HCT116 (cell line): ENCODE measurements at regions of chr17 and their contacts with region 1.

Region 1: GRCh38 chr17:58020401-58020800 is 13.4 kb upstream of the SRSF1 start:
- DNase-seq: no peak
- ATAC-seq: no peak
- H3K4me3 ChIP-seq: no peak overlapping the region
- H3K27ac ChIP-seq: no peak overlapping the region
- H3K4me1 ChIP-seq: peaks cover 24 to 30% of the 10 kb centered on the region in 2 experiments
- H3K27me3 ChIP-seq: no peaks in the 10 kb centered on the region
- CTCF ChIP-seq: no peak
- POLR2A ChIP-seq: no peak
- RAD21 ChIP-seq: no peak

Region 2: DNA sequence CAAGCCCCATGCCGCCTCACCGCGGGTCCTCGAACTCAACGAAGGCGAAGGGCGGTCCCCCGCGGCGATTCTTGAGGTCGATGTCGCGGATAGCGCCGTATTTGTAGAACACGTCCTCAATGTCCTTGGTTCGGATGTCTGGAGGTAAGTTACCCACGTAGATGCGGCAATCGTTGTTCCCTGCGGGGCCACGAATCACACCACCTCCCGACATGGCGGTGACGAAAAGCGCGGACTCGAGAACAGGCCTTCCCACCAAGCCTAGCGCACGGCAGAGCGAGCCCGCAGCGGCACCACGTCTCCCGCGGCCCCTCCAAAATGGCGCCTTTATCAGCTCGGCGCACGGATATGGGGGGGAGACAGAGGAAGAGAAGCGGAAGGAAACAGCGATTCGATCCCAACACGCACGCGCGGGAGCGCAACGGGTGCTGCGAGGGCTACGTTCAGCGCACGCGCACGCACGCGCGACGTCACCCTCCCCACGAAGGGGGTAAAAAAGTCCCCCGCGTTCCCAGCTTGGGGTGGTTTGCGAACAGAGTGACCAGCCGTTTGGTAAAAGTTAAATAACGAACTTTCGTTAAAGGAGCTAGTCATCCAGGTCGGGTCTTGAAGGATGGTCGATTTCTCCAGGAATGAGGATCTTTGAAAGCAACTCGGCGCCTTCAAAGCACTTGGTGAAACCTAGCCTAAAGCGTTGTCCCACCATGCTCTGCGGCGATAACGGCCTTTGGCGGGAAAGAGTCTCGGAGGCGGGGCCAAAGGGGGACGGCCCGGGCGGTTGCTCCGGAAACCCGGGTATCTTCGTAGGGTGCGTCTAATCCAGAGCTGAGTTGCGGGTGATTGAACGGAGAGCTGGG is 13.2 kb before region 1 on chr17 and contains the start of gene SRSF1:
- CTCF ChIA-PET with region 1: no interaction called
- POLR2A ChIA-PET with region 1: interaction called, 18 read pairs
- RAD21 ChIA-PET with region 1: no interaction called
- intact Hi-C with region 1: no loop called
- DNase-seq: peak; percentile 99
- ATAC-seq: peak; percentile 86
- H3K4me3 ChIP-seq: peak within 1 kb of the TSS; percentile 88 to 94
- H3K27ac ChIP-seq: peak within 1 kb of the TSS; percentile 100
- H3K4me1 ChIP-seq: peaks cover 24 to 41% of the 10 kb centered on the region in 2 experiments
- H3K27me3 ChIP-seq: no peaks in the 10 kb centered on the region
- CTCF ChIP-seq: no peak
- POLR2A ChIP-seq: peak; percentile 85
- RAD21 ChIP-seq: no peak
- total RNA-seq, gene SRSF1: 434 TPM

Region 3: GRCh38 chr17:58032691-58033415 is 12.5 kb after region 1 on chr17:
- CTCF ChIA-PET with region 1: no interaction called
- POLR2A ChIA-PET with region 1: no interaction called
- RAD21 ChIA-PET with region 1: no interaction called
- intact Hi-C with region 1: no loop called
- DNase-seq: no peak
- ATAC-seq: no peak
- H3K4me3 ChIP-seq: no peak overlapping the region
- H3K27ac ChIP-seq: no peak overlapping the region
- H3K4me1 ChIP-seq: peaks cover 0 to 4% of the 10 kb centered on the region in 2 experiments; a peak in 1 of 4 replicates
- H3K27me3 ChIP-seq: no peaks in the 10 kb centered on the region
- CTCF ChIP-seq: no peak
- POLR2A ChIP-seq: no peak
- RAD21 ChIP-seq: no peak